ENCODE measurements at regions of chr1 and their contacts with region 1.

Region 1: GRCh38 chr1:155017041-155017945 is 14.7 kb downstream of the ZBTB7B start:
- DNase-seq: peak; percentile 81
- H3K4me3 Mint-ChIP-seq: peak overlapping the region; percentile 69
- H3K27ac Mint-ChIP-seq: peak overlapping the region; percentile 7
- H3K4me1 Mint-ChIP-seq: peaks cover 54% of the 10 kb centered on the region
- H3K27me3 Mint-ChIP-seq: no peaks in the 10 kb centered on the region

Region 2: DNA sequence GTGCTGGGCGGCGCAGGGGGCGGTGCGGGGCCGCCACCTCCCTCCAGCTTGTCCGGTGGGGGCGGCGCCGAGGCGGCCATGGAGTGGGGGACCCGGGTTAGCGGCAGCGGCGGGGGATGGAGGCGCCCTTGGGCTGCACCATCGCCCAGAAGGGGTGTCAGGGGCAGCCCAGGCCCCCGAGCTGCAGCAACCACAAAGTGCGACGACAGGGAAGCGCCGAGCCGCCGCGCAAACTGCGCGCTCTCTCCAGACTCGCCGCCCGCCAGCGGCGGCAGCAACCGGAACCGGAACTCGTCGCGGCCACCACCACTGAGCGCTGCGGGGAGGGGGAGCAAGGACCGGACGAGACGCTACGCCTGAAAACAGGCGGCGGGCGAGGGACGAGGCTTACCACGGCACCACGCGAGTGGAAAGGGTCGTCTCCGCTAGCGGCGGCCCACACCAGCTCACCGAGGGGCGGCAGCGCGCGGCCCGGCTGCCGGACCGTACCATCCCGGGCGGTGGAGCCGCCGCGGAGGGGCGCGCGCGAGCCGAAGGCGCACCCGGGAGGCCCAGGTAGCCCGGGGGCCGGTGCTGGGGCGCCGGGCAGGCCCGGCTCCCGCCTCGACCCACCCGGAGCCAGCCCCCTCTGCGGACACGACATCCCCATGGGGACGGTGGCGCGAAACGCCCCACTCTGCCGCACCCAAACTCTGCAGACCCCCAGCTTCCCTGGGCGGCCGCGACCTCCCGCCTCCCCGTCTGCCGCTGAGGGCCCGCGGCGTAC is 55.6 kb before region 1 on chr1 and contains the start of gene PYGO2:
- intact Hi-C with region 1: loop called (anchors 1 kb)
- DNase-seq: peak; percentile 82
- H3K4me3 Mint-ChIP-seq: peak within 1 kb of the TSS; percentile 96
- H3K27ac Mint-ChIP-seq: peak within 1 kb of the TSS; percentile 93
- H3K4me1 Mint-ChIP-seq: peaks cover 36% of the 10 kb centered on the region
- H3K27me3 Mint-ChIP-seq: peaks cover 2% of the 10 kb centered on the region
- total RNA-seq, gene PYGO2: 34.7 and 35.0 TPM in 2 replicates

Region 3: GRCh38 chr1:154982897-154983648 is 34.2 kb before region 1 on chr1 and contains the start of gene FLAD1:
- intact Hi-C with region 1: loop called (anchors 1 kb)
- DNase-seq: peak; percentile 96
- H3K4me3 Mint-ChIP-seq: no peak within 1 kb of the TSS
- H3K27ac Mint-ChIP-seq: peak within 1 kb of the TSS; percentile 42
- H3K4me1 Mint-ChIP-seq: peaks cover 8% of the 10 kb centered on the region
- H3K27me3 Mint-ChIP-seq: no peaks in the 10 kb centered on the region
- total RNA-seq, gene FLAD1: 69.2 and 74.3 TPM in 2 replicates

Region 4: GRCh38 chr1:154993572-154994268 is 23.6 kb before region 1 on chr1 and contains the start of gene LENEP:
- intact Hi-C with region 1: no loop called
- DNase-seq: no peak
- H3K4me3 Mint-ChIP-seq: no peak within 1 kb of the TSS
- H3K27ac Mint-ChIP-seq: peak within 1 kb of the TSS; percentile 61
- H3K4me1 Mint-ChIP-seq: peaks cover 41% of the 10 kb centered on the region
- H3K27me3 Mint-ChIP-seq: no peaks in the 10 kb centered on the region
- total RNA-seq, gene LENEP: 1.5 and 1.8 TPM in 2 replicates

Region 5: DNA sequence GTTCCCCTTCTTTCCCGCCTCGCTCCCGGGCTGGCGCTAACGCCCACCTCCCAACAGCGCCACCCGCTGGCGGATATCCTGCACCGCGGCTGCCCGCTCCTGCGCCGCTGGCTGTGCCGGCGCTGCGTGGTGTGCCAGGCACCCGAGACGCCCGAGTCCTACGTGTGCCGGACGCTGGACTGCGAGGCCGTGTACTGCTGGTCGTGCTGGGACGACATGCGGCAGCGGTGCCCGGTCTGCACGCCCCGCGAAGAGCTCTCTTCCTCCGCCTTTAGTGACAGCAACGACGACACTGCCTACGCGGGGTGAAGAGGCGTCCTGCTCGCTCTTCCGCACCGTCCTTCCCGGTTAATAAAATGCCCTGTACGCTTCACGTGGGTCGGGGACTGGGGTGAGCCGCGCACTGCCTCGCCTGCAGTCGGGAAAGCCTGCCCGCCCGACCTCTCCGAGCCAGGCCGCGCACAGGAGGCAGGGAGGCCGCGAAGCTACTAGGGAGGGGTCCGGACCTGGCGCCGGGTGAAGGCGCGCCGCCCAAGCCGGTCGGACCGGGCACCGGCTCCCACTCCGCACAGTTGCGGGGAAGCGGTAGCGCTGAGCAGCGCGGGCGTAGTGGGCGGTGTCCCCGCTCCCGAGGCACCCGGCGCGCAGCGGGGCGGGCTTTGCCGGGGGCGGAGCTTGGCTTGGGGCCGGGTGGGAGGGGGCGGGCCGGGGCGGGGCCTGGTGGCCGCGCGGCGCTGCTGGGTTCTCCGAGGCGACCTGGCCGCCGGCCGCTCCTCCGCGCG is 33.5 kb after region 1 on chr1 and contains the start of gene ADAM15:
- intact Hi-C with region 1: loop called (anchors 1 kb)
- DNase-seq: peak; percentile 79
- H3K4me3 Mint-ChIP-seq: peak within 1 kb of the TSS; percentile 88
- H3K27ac Mint-ChIP-seq: peak within 1 kb of the TSS; percentile 88
- H3K4me1 Mint-ChIP-seq: peaks cover 28% of the 10 kb centered on the region
- H3K27me3 Mint-ChIP-seq: no peaks in the 10 kb centered on the region
- total RNA-seq, gene ADAM15: 82.9 and 86.8 TPM in 2 replicates

Region 6: GRCh38 chr1:155329971-155330598 is 312.8 kb after region 1 on chr1:
- intact Hi-C with region 1: no loop called
- DNase-seq: no peak
- H3K4me3 Mint-ChIP-seq: no peak overlapping the region
- H3K27ac Mint-ChIP-seq: no peak overlapping the region
- H3K4me1 Mint-ChIP-seq: peaks cover 9% of the 10 kb centered on the region
- H3K27me3 Mint-ChIP-seq: no peaks in the 10 kb centered on the region